Mammary epithelial cell (primary cell): ENCODE measurements at regions of chr9 and their contacts with region 1.

Region 1: DNA sequence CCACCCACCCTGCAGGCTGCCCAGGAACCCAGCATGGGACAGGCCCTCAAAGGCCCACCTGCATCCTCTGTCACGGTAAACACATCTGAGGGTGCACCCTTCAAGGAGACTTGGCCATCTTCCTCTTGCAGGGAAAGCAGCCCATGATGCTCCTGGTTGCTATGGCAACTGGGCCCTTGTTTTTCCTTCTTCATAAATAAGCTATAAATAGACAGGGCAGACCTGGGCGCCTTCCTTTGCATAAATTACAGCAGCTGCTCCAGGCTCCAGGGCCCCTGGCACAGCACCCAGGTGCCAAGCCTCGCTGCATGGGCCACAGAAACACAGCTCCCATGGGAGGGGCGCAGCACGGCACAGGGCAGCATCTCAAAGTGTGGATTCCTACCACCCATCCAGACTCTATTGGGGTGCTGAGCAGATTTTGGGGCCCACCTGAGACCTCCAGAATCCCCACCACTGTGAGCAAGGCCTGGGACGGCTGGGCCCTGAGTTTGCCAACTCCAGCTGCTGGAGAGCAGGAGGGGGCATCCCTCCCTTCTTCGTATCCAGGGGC is 5.8 kb upstream of the PSMB7 start:
- DNase-seq: no peak
- H3K4me3 ChIP-seq: no peak overlapping the region
- H3K27ac ChIP-seq: no peak overlapping the region
- H3K4me1 ChIP-seq: no peaks in the 10 kb centered on the region
- H3K27me3 ChIP-seq: no peaks in the 10 kb centered on the region
- CTCF ChIP-seq: no peak

Region 2: DNA sequence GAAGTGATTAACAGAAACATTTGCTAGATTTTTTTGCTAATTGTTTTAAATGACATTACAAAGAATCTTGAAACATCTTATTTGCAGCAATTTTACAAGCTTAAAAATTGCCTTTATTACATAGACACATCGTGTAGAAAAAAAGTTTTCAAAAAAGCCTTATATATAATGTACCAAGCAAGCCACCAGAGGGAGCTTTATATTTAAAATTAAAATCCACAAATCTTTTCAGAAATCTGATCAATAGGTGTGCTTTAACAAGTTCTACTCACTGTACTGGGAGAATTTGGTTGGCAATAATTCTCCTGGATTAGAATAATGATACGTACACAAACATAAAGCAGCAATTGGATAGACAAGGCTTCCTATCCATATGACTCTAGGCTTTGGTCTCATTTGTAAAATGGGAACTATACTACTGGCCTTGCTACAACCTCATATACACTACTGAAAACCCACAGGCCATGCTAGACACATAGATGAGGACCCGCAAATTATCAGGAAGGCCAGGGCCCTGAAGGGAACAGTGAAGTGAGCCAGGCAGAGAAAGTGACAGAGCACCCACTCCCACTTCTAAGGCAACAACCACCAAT is 10.7 kb before region 1 on chr9:
- CTCF ChIA-PET with region 1: no interaction called
- dilution Hi-C with region 1: no loop called
- in situ Hi-C with region 1: no loop called
- intact Hi-C with region 1: no loop called
- DNase-seq: no peak
- H3K4me3 ChIP-seq: no peak overlapping the region
- H3K27ac ChIP-seq: peak overlapping the region; percentile 89
- H3K4me1 ChIP-seq: peaks cover 43% of the 10 kb centered on the region
- H3K27me3 ChIP-seq: no peaks in the 10 kb centered on the region
- CTCF ChIP-seq: peak; percentile 33 to 36

Region 3: DNA sequence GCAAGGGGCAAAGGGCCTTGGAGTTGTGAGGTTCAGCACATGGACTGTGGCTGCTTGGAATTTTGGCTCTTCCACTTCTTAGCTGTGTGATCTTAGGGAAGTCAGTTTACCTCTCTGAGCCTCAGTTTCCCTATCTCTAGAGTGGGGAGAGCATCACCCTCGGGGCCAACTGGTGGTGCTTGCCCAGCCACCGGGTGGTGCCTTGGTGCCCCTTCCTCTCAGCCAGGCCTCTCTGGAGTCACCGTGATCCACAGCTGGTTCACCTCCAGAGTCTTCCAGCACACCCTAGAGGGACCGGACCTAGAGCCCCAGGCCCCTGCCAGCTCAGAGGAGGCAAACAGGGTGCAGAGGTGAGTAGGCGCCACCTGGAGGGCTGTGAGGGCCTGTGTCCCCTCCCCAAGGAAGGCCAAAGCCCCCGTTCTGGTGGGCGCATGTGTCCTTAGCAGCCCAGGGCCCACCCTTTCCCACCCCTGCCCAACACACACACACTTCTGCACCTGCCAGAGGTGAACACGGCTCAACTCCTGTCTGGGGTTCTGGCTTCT is 36.9 kb after region 1 on chr9:
- CTCF ChIA-PET with region 1: no interaction called
- dilution Hi-C with region 1: no loop called
- in situ Hi-C with region 1: no loop called
- intact Hi-C with region 1: loop called (anchors 1 kb)
- DNase-seq: no peak
- H3K4me3 ChIP-seq: no peak overlapping the region
- H3K27ac ChIP-seq: no peak overlapping the region
- H3K4me1 ChIP-seq: no peaks in the 10 kb centered on the region
- H3K27me3 ChIP-seq: no peaks in the 10 kb centered on the region
- CTCF ChIP-seq: peak in 1 of 2 donors; percentile 11

Region 4: GRCh38 chr9:124480621-124480981 is 59.5 kb after region 1 on chr9:
- CTCF ChIA-PET with region 1: interaction called, 4 read pairs
- dilution Hi-C with region 1: no loop called
- in situ Hi-C with region 1: no loop called
- intact Hi-C with region 1: loop called (anchors 1 kb)
- DNase-seq: peak; percentile 20
- H3K4me3 ChIP-seq: no peak overlapping the region
- H3K27ac ChIP-seq: no peak overlapping the region
- H3K4me1 ChIP-seq: peaks cover 5% of the 10 kb centered on the region
- H3K27me3 ChIP-seq: peaks cover 17% of the 10 kb centered on the region
- CTCF ChIP-seq: no peak

Region 5: DNA sequence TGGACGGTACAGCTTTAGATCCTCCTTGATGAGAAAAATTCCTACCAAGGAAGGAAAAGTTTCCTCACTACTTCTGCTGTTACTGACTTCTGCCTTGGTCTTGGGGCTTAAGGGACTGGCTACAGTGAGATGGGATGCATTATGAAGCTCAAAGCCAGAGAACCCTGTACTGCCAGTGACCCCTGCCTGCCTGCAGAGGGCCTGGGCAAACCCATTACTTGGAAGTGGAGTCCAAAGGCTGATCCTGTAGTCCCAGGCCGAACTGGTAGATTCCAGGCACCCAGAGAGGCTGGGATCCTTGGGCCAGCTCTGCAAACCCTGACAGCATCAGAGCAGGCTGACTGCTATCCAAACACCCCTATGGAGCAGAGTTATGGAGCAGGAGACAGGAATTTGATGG is 111.8 kb after region 1 on chr9:
- CTCF ChIA-PET with region 1: no interaction called
- dilution Hi-C with region 1: no loop called
- in situ Hi-C with region 1: loop called (anchors 5 kb)
- intact Hi-C with region 1: loop called (anchors 1 kb)
- DNase-seq: no peak
- H3K4me3 ChIP-seq: no peak overlapping the region
- H3K27ac ChIP-seq: no peak overlapping the region
- H3K4me1 ChIP-seq: no peaks in the 10 kb centered on the region
- H3K27me3 ChIP-seq: no peaks in the 10 kb centered on the region
- CTCF ChIP-seq: peak in 1 of 2 donors; percentile 4

Region 6: GRCh38 chr9:124537926-124538325 is 116.9 kb after region 1 on chr9:
- CTCF ChIA-PET with region 1: no interaction called
- dilution Hi-C with region 1: no loop called
- in situ Hi-C with region 1: loop called (anchors 5 kb)
- intact Hi-C with region 1: loop called (anchors 1 kb)
- DNase-seq: no peak
- H3K4me3 ChIP-seq: no peak overlapping the region
- H3K27ac ChIP-seq: no peak overlapping the region
- H3K4me1 ChIP-seq: no peaks in the 10 kb centered on the region
- H3K27me3 ChIP-seq: no peaks in the 10 kb centered on the region
- CTCF ChIP-seq: no peak